ENCODE measurements at regions of chr20 and their contacts with region 1.

Region 1: DNA sequence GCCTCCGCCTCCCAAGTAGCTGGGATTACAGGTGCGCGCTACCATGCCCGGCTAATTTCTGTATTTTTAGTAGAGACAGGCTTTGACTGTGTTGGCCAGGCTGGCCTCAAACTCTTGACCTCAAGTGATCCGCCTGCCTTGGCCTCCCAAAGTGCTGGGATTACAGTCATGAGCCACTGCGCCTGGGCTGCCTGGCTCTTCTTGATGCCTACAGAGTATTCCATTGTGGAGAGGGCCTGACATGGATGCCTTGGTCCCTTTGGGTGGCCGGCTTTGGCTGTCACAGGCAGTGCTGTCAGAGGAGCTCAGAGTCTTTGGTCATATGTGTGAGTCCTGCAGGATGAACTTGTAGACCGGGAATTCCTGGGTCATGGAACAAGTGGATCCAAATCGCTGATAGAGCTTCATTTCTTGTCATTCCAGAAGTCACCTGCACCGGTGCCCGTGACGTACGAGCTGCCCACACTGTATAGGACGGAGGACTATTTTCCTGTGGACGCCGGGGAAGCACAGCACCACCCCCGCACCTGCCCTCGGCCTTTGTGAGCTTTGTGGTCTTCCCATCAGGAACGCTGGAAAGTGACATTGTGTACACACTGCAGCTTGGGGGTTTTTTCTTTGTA is 55.1 kb downstream of the ADNP start:
- DNase-seq: no peak
- H3K4me3 ChIP-seq: no peak overlapping the region
- CTCF ChIP-seq: no peak
- POLR2A ChIP-seq: no peak

Region 2: GRCh38 chr20:50891138-50891537 is 15.0 kb after region 1 on chr20:
- intact Hi-C with region 1: no loop called
- DNase-seq: no peak
- H3K4me3 ChIP-seq: no peak overlapping the region
- CTCF ChIP-seq: no peak
- POLR2A ChIP-seq: no peak

Region 3: DNA sequence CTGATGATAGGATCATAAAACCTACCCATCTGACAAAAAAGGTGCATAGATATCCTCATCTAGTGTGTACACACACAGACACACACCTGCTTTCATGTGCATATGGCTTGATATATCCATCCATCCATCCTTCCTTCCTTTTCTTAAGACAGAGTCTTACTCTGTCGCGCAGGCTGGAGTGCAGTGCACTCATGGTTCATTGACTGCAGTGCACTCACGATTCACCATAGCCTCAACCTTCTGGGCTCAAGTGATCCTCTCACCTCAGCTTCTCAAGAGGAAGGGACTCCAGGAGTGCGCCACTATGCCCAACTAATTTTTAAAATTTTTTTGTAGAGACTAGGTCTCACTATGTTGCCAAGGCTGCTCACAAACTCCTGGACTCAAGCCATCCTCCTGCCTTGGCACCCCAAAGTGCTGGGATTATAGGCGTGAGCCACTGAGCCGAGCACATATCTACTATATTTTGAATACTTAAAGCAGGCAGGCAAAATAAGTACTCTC is 27.9 kb after region 1 on chr20:
- intact Hi-C with region 1: loop called (anchors 1 kb)
- DNase-seq: no peak
- H3K4me3 ChIP-seq: no peak overlapping the region
- CTCF ChIP-seq: no peak
- POLR2A ChIP-seq: no peak